IMR-90 (cell line): ENCODE measurements at regions of chr18 and their contacts with region 1.

Region 1: DNA sequence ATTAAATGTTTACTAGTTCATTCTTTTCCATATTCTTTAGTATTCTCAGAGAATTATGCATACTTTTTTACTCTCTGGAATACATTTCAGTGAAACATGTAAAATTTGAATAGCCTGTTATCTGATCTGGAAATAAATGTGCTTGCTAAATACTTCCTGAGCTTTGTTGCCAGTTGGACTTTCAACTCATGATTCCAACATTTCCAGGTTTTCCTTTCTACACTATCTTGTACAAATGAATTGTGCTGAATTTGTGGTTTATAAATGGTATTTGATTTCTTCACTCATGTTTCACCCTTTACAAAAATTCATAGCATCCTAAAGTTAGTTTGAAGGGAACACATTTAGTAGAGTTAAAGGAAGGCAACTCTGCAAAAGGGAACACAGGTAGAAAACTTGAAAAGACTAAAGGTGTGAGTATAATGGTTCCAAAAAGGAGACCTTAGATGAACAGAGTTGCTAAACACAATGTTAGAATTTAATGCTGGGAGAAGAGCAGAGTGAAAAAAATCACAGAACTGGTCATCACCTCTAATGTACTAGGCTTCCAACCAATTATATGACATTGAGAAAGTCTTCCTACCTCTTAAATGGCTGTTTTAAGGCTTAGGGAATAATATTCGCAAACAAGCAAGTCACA is 28.6 kb downstream of the SYT4 start:
- DNase-seq: no peak
- ATAC-seq: no peak
- H3K4me3 ChIP-seq: no peak overlapping the region
- H3K27ac ChIP-seq: no peak overlapping the region
- H3K4me1 ChIP-seq: no peaks in the 10 kb centered on the region
- H3K27me3 ChIP-seq: no peaks in the 10 kb centered on the region
- CTCF ChIP-seq: no peak
- POLR2A ChIP-seq: no peak
- RAD21 ChIP-seq: no peak

Region 2: GRCh38 chr18:41899535-41899934 is 1349.2 kb before region 1 on chr18:
- CTCF ChIA-PET with region 1: no interaction called
- POLR2A ChIA-PET with region 1: no interaction called
- dilution Hi-C with region 1: no loop called
- in situ Hi-C with region 1: no loop called
- intact Hi-C with region 1: no loop called
- DNase-seq: no peak
- ATAC-seq: no peak
- H3K4me3 ChIP-seq: no peak overlapping the region
- H3K27ac ChIP-seq: no peak overlapping the region
- H3K4me1 ChIP-seq: no peaks in the 10 kb centered on the region
- H3K27me3 ChIP-seq: no peaks in the 10 kb centered on the region; the same call in 1 of the 2 replicates
- CTCF ChIP-seq: no peak
- POLR2A ChIP-seq: no peak
- RAD21 ChIP-seq: peak; percentile 6; the same call in 1 of the 2 replicates

Region 3: GRCh38 chr18:43129946-43130524 is 118.7 kb before region 1 on chr18:
- CTCF ChIA-PET with region 1: no interaction called
- POLR2A ChIA-PET with region 1: interaction called, 10 read pairs
- dilution Hi-C with region 1: no loop called
- in situ Hi-C with region 1: no loop called
- intact Hi-C with region 1: no loop called
- DNase-seq: no peak
- ATAC-seq: no peak
- H3K4me3 ChIP-seq: no peak overlapping the region
- H3K27ac ChIP-seq: no peak overlapping the region
- H3K4me1 ChIP-seq: no peaks in the 10 kb centered on the region
- H3K27me3 ChIP-seq: no peaks in the 10 kb centered on the region
- CTCF ChIP-seq: no peak
- POLR2A ChIP-seq: no peak
- RAD21 ChIP-seq: no peak

Region 4: DNA sequence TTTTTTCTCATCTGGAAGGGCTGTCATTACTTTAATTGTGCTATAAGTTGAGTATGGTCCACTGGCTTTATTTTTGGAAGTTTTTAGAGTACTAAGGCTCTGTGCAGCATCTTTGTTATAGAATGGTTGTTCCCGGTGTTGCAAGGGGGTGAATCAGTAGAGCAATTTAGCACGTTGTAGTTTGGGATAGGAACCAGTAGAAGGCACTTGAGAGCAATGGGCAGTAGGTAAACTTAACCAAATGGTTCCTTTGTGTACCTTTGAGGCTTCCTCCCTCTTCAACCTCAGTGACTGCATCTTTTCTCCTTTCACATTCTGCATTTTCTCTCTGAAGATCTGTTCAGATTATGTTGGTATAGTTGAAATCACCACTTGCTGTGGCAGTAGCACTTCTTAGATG is 266.8 kb after region 1 on chr18:
- CTCF ChIA-PET with region 1: no interaction called
- POLR2A ChIA-PET with region 1: no interaction called
- dilution Hi-C with region 1: no loop called
- in situ Hi-C with region 1: no loop called
- intact Hi-C with region 1: no loop called
- DNase-seq: no peak
- ATAC-seq: no peak
- H3K4me3 ChIP-seq: no peak overlapping the region
- H3K27ac ChIP-seq: no peak overlapping the region
- H3K4me1 ChIP-seq: no peaks in the 10 kb centered on the region
- H3K27me3 ChIP-seq: no peaks in the 10 kb centered on the region
- CTCF ChIP-seq: no peak
- POLR2A ChIP-seq: no peak
- RAD21 ChIP-seq: no peak